SK-N-SH (cell line): ENCODE measurements at regions of chr10 and their contacts with region 1.

Region 1: GRCh38 chr10:46019569-46020343 is 10.7 kb downstream of the NCOA4 start:
- DNase-seq: no peak
- H3K4me3 ChIP-seq: no peak overlapping the region
- H3K27ac ChIP-seq: no peak overlapping the region
- H3K4me1 ChIP-seq: peaks cover 8 to 22% of the 10 kb centered on the region in 2 experiments
- H3K27me3 ChIP-seq: no peaks in the 10 kb centered on the region
- CTCF ChIP-seq: no peak
- EP300 ChIP-seq: no peak
- RAD21 ChIP-seq: no peak

Region 2: GRCh38 chr10:46030091-46030937 is 10.6 kb after region 1 on chr10 and contains the start of gene NCOA4:
- CTCF ChIA-PET with region 1: interaction called, 24 read pairs
- POLR2A ChIA-PET with region 1: no interaction called
- DNase-seq: peak; percentile 98
- H3K4me3 ChIP-seq: peak within 1 kb of the TSS; percentile 79 to 94
- H3K27ac ChIP-seq: peak within 1 kb of the TSS; percentile 59 to 81
- H3K4me1 ChIP-seq: peaks cover 5 to 18% of the 10 kb centered on the region in 2 experiments; a peak in 3 of 4 replicates
- H3K27me3 ChIP-seq: no peaks in the 10 kb centered on the region
- CTCF ChIP-seq: peak; percentile 73
- EP300 ChIP-seq: no peak
- RAD21 ChIP-seq: 0 out of 2 replicates have a peak, but pooled peaks have one; percentile 26
- polyA plus RNA-seq, gene NCOA4: 30.3 and 44.9 TPM in 2 replicates